ENCODE measurements at regions of chr11 and their contacts with region 1.

Region 1: DNA sequence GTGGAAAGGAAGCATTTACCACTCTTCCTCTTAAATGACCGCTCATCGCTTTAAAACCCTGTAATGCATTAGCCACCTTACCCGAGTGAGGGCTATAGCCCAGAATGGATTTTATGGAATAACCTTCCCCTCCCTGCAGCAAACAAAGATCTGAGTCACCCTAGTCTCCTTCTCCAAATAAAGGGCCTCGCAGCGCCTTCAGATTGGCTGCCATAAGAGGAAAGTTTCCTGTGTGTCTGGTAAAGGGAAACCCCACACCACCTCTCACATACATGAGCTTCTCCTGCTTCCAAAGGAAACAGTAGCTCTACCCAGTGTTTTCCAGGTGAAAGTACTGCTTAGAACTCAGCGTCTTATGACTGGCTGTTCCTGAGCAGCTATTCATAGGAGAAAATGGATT is 47.8 kb downstream of the PPP2R1B start:
- DNase-seq: peak; percentile 57
- H3K4me3 ChIP-seq: no peak overlapping the region
- H3K27ac ChIP-seq: peak overlapping the region; percentile 55 to 77 (median 70)
- H3K4me1 ChIP-seq: peaks cover 5 to 16% (median 15%) of the 10 kb centered on the region in 4 donors
- H3K27me3 ChIP-seq: no peaks in the 10 kb centered on the region
- CTCF ChIP-seq: no peak
- EP300 ChIP-seq: no peak
- POLR2A ChIP-seq: no peak

Region 2: GRCh38 chr11:111612224-111612623 is 106.2 kb before region 1 on chr11:
- in situ Hi-C with region 1: loop called in 1 of 4 experiments (anchors 10 kb)
- intact Hi-C with region 1: no loop called
- DNase-seq: no peak
- H3K4me3 ChIP-seq: no peak overlapping the region
- H3K27ac ChIP-seq: peak overlapping the region in 1 of 4 donors; percentile 25
- H3K4me1 ChIP-seq: peaks cover 0 to 18% (median 0%) of the 10 kb centered on the region in 4 donors
- H3K27me3 ChIP-seq: no peaks in the 10 kb centered on the region
- CTCF ChIP-seq: no peak
- EP300 ChIP-seq: no peak
- POLR2A ChIP-seq: no peak

Region 3: DNA sequence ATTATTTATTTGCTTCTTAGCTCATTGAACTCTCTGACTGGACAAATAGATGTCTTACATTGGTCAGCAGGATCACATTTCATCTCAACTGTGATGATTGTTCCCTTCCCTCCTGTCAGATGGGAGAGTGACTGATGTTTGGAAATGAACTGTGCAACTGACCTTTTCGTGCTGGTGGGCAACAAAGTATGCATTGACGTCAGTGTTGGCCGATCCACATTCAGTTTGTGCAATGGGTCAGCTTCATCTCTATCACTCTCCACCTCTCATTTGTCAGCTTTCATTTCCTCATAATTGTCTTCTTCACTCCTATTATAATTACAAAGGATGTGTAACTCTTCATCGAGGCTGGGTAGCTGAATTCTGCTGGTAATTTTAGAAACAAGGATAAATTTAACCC is 23.6 kb before region 1 on chr11:
- in situ Hi-C with region 1: no loop called
- intact Hi-C with region 1: loop called (anchors 1 kb)
- DNase-seq: no peak
- H3K4me3 ChIP-seq: no peak overlapping the region
- H3K27ac ChIP-seq: no peak overlapping the region
- H3K4me1 ChIP-seq: peaks cover 0 to 5% (median 0%) of the 10 kb centered on the region in 4 donors
- H3K27me3 ChIP-seq: no peaks in the 10 kb centered on the region
- CTCF ChIP-seq: no peak
- EP300 ChIP-seq: no peak
- POLR2A ChIP-seq: no peak

Measured in transverse colon (tissue), 4 donors.